Naive thymus-derived CD8-positive, alpha-beta T cell (primary cell): ENCODE measurements at regions of chr17 and their contacts with region 1.

Region 1: GRCh38 chr17:38729886-38730525 is at the start of gene CISD3:
- DNase-seq: peak; percentile 73 to 90 (median 84)
- ATAC-seq: peak; percentile 78 to 80
- H3K4me3 Mint-ChIP-seq: peak within 1 kb of the TSS; percentile 84 to 98 (median 95)
- H3K27ac Mint-ChIP-seq: peak within 1 kb of the TSS; percentile 88 to 97 (median 96)
- H3K4me1 Mint-ChIP-seq: peaks cover 30 to 83% (median 82%) of the 10 kb centered on the region in 4 donors
- H3K27me3 Mint-ChIP-seq: peaks cover 0 to 2% (median 0%) of the 10 kb centered on the region in 5 donors
- polyA plus RNA-seq, gene CISD3: 40.5 to 63.3 (median 46.2) TPM

Region 2: GRCh38 chr17:38674749-38675615 is 55.0 kb before region 1 on chr17 and contains the start of gene EPOP:
- POLR2A ChIA-PET with region 1: interaction called, 30 read pairs
- DNase-seq: peak; percentile 64 to 88 (median 76)
- ATAC-seq: peak; percentile 85 to 87
- H3K4me3 Mint-ChIP-seq: peak within 1 kb of the TSS; percentile 63 to 84 (median 70)
- H3K27ac Mint-ChIP-seq: peak within 1 kb of the TSS in 5 of 10 donors; percentile 0 to 64 (median 27)
- H3K4me1 Mint-ChIP-seq: peaks cover 10 to 31% (median 25%) of the 10 kb centered on the region in 4 donors
- H3K27me3 Mint-ChIP-seq: peaks cover 11 to 32% (median 28%) of the 10 kb centered on the region in 5 donors
- polyA plus RNA-seq, gene EPOP: 0.04 to 0.10 TPM in 2 of 3 donors, not detected in the other

Region 3: GRCh38 chr17:38697061-38697820 is 32.8 kb before region 1 on chr17:
- POLR2A ChIA-PET with region 1: interaction called, 395 read pairs
- DNase-seq: peak in 2 of 10 donors; percentile 24 to 41
- ATAC-seq: peak in 1 of 2 donors; percentile 21
- H3K4me3 Mint-ChIP-seq: peak overlapping the region in 8 of 10 donors; percentile 22 to 73 (median 52)
- H3K27ac Mint-ChIP-seq: peak overlapping the region; percentile 50 to 93 (median 82)
- H3K4me1 Mint-ChIP-seq: peaks cover 28 to 38% (median 35%) of the 10 kb centered on the region in 4 donors
- H3K27me3 Mint-ChIP-seq: peaks cover 0 to 2% (median 0%) of the 10 kb centered on the region in 5 donors

Region 4: GRCh38 chr17:38752119-38752929 is 22.3 kb after region 1 on chr17 and contains the start of gene PSMB3:
- POLR2A ChIA-PET with region 1: interaction called, 11 read pairs
- DNase-seq: peak; percentile 85 to 98 (median 96)
- ATAC-seq: peak; percentile 89 to 90
- H3K4me3 Mint-ChIP-seq: peak within 1 kb of the TSS; percentile 87 to 100 (median 99)
- H3K27ac Mint-ChIP-seq: peak within 1 kb of the TSS; percentile 93 to 100 (median 98)
- H3K4me1 Mint-ChIP-seq: peaks cover 22 to 64% (median 59%) of the 10 kb centered on the region in 4 donors
- H3K27me3 Mint-ChIP-seq: peaks cover 1 to 33% (median 14%) of the 10 kb centered on the region in 5 donors
- polyA plus RNA-seq, gene PSMB3: 338 to 361 (median 349) TPM

Region 5: DNA sequence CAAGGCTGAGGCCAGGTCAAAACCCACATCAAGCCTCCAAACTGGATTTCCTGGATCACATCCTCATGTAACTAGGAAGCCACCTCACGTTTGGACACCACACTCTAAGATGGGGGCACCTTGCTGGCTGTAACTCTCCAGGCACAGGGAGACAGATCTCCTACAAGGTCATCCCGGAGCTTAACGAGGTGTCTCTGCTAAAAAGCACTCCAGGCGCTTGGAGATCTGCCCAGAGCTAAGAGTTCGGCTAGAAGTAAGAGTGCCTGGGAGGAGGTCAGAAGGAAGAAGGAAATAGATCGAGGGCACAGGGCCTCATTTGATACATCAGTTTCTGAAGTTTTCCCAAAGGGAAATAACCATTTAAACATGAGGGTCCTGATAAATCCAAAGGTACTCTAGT is 38.4 kb after region 1 on chr17:
- POLR2A ChIA-PET with region 1: no interaction called
- DNase-seq: no peak
- ATAC-seq: no peak
- H3K4me3 Mint-ChIP-seq: no peak overlapping the region
- H3K27ac Mint-ChIP-seq: peak overlapping the region in 2 of 10 donors; percentile 11 to 55
- H3K4me1 Mint-ChIP-seq: peaks cover 1 to 15% (median 8%) of the 10 kb centered on the region in 4 donors
- H3K27me3 Mint-ChIP-seq: no peaks in the 10 kb centered on the region